ENCODE measurements at regions of chr10 and their contacts with region 1.

Region 1: DNA sequence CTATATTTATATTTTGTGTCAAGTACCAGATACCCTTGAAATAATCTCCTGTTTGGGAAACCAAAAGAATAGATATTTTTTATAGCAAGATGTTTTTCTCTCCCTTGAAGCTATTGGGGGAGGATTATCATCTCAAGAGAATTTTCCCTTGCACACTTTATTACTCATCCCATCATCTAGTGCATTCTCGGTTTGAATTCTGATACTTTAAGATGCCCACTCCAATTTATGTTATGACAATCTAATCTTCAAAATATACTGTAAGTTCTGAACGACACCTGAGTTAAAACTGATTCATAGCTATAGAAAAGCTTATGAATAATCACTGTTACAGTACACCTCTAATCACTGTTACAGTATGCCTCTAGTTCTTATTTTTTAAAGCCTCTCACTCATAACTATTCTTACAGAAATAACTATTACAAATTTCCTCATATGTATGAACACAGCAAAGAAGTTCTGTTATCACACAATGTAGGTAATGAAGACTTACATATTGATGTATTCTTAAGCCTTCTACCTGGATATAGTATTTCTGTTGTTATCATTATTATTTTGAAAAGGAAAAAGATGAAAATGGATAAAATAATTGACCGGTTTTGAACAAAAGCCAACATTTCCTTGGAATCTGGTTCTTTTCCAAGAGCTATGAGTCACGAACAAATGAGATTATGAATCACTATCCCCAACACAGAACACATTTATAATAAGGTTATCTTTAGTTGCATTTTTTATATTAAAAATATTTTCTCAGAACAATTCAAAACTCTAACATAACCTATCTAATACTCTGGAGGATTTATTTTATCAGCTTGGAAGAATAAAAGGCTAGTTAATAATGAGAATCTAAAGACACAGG is 72.3 kb upstream of the FAM13C start:
- DNase-seq: no peak
- H3K4me3 ChIP-seq: no peak overlapping the region
- H3K27ac ChIP-seq: no peak overlapping the region
- H3K27me3 ChIP-seq: no peaks in the 10 kb centered on the region
- CTCF ChIP-seq: no peak

Region 2: GRCh38 chr10:59465088-59465487 is 30.4 kb after region 1 on chr10:
- CTCF ChIA-PET with region 1: interaction called, 13 read pairs
- POLR2A ChIA-PET with region 1: no interaction called
- DNase-seq: peak; percentile 26
- H3K4me3 ChIP-seq: no peak overlapping the region
- H3K27ac ChIP-seq: no peak overlapping the region
- H3K27me3 ChIP-seq: no peaks in the 10 kb centered on the region
- CTCF ChIP-seq: peak; percentile 53